ENCODE measurements at regions of chr10 and their contacts with region 1.

Region 1: GRCh38 chr10:68876246-68877138 is 24.6 kb upstream of the DDX50 start:
- DNase-seq: no peak

Region 2: DNA sequence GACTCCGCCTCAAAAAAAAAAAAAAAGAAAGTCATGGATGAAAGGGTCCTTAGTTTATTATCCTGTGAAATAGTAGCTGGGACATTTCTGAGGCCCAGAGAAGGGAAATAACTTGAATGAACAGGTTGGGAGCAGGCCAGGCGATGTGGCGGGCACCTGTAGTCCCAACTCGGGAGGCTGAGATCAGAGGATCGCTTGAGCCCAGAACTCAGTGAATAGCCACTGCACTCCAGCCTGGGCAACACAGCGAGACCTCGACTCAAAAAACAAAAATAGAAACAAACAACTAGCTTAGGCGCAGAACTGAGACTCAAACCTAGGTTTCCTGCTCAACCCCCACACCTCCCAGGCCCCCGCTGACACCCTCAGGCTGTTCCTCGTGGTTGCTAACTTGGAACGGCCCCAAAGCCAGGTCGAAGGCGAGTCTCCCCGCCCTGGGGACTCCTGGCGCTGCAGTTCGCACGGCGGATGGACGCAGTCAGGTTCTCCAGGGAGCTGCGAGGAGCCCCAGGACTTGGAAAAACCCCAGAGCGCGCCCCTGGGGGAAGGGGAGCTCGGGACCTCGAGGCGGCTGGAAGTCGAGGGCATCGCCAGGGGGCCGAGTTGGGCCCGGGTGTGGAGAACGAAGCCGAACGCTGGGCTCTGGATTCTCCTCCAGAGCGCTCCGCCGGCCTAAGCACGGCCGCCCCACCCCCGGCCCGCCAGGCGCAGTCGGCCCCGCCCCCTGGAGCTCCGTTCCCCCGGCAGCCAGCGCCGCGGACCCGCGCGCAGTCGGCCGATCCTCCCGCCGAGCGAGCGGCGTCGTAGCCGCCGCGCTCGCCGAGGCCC is 49.5 kb before region 1 on chr10 and contains the start of gene STOX1:
- CTCF ChIA-PET with region 1: no interaction called
- POLR2A ChIA-PET with region 1: interaction called, 10 read pairs
- DNase-seq: peak; percentile 81

Region 3: GRCh38 chr10:68992636-68993440 is 116.3 kb after region 1 on chr10:
- CTCF ChIA-PET with region 1: no interaction called
- POLR2A ChIA-PET with region 1: no interaction called
- DNase-seq: no peak